ENCODE measurements at regions of chr3 and their contacts with region 1.

Region 1: GRCh38 chr3:71601811-71602210 is 18.3 kb upstream of the FOXP1 start:
- DNase-seq: no peak

Region 2: DNA sequence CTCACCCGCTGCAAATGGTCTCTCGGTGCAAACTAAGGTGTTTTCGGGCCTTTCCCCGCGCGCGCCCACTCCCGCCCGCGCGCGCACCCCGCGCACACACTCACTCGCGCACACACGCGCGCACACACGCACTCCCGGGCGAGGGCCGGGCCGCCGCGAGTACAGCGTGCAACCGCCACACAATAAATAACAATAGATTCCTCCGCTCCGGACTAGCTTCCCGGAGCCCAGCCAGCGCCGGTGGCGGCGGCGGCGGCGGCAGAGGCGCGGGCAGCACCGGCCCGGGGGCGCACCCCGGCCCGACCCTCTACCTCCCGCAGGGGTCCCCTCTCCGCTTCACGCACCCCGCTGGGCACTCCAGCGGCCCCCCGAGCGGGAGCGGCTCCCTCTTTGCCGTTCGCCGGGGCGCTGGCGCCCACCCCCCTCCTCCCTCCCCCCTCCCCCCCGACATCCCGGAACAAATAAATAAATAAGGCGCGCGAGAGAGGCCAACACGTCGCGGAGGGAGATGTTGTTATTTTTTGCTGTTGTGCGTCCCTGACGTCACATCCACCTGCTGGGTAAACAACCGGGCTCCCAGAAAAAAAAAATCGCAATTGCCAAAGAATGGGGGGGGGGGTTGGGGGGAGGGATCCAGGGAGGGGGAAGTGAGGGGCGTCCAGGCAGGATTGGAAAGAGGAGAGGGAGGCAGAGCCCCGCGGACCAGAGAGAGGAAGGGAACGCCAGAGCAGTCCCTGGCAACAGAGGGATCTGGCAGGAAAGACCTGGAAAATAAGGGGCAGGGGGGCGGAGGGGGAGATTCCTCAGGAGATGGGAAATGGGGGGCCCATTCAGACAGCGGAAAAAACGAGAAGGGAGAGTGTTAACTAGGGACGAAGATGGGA is 18.0 kb before region 1 on chr3 and contains the start of gene FOXP1:
- intact Hi-C with region 1: no loop called
- DNase-seq: peak; percentile 91
- total RNA-seq, gene FOXP1: 109 to 112 TPM

Region 3: DNA sequence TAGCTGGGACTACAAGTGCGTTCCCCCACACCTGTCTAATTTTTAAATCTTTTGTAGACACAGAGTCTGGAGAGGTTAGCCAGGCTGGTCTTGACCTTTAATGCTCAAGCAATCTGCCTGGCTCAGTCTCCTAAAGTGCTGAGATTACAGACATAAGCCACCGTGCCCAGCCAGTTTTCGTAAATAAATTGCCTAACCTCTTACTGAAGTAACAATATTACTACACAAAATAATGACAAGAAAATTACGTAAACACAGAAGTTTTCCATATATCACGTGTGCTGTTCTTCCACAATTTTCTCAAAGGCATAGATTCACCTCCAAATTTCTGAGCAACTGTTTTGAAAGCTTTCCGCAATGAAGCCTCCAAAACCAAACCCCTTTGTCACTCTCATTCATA is 241.3 kb after region 1 on chr3:
- intact Hi-C with region 1: loop called in 1 of 2 experiments (anchors 5 kb)
- DNase-seq: no peak